ENCODE measurements at regions of chr7 and their contacts with region 1.

Region 1: DNA sequence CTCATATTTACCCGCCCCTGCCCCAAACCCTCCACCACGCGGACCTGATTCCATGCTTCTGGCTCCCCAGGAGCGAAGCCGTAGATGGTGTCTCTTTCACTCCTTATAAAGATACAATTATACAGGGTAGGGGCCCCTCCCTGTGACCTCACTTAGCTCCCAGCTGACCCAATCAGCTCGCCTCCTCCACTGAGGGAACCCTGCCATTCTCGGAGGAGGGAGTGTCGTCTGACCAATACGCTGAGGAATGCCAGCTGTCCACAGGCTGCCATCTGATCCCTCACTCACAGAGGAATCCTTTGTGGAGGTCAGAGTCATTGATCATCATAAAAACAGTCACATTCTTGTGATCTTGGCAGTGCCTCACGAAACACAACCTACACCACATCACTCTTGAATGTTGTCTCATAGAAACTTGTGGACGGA is 67.5 kb upstream of the INSIG1 start:
- DNase-seq: peak; percentile 100
- H3K4me3 ChIP-seq: no peak overlapping the region
- H3K27ac ChIP-seq: peak overlapping the region; percentile 85
- H3K4me1 ChIP-seq: peaks cover 7% of the 10 kb centered on the region
- H3K27me3 ChIP-seq: no peaks in the 10 kb centered on the region
- CTCF ChIP-seq: no peak

Region 2: DNA sequence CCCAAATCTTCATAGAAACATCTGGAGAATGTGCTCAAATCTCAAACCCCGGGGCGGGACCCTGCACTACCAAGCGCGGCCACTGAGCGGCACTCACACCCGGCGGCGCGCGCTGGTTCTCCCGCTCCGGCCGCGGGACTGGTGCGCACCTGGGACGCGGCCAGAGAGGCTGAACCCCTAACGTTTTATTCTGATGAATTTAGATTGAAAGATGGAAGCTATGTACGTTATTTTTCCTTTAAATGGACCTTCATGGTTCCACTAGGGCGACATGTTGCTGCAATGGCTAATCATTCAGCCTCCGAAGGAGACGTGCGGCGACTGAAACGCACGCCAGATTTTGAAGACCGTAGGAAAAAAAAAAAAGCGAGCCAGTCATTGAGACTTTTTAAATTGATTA is 39.5 kb before region 1 on chr7:
- CTCF ChIA-PET with region 1: no interaction called
- dilution Hi-C with region 1: loop called (anchors 5 kb)
- in situ Hi-C with region 1: no loop called
- intact Hi-C with region 1: no loop called
- DNase-seq: no peak
- H3K4me3 ChIP-seq: peak overlapping the region in 1 of 3 experiments; percentile 0
- H3K27ac ChIP-seq: no peak overlapping the region
- H3K4me1 ChIP-seq: no peaks in the 10 kb centered on the region
- H3K27me3 ChIP-seq: no peaks in the 10 kb centered on the region
- CTCF ChIP-seq: peak; percentile 81 to 94

Region 3: GRCh38 chr7:155205368-155206317 is 24.5 kb before region 1 on chr7:
- CTCF ChIA-PET with region 1: no interaction called
- dilution Hi-C with region 1: no loop called
- in situ Hi-C with region 1: no loop called
- intact Hi-C with region 1: loop called (anchors 2 kb)
- DNase-seq: peak; percentile 95
- H3K4me3 ChIP-seq: no peak overlapping the region
- H3K27ac ChIP-seq: peak overlapping the region; percentile 49
- H3K4me1 ChIP-seq: peaks cover 11% of the 10 kb centered on the region
- H3K27me3 ChIP-seq: no peaks in the 10 kb centered on the region
- CTCF ChIP-seq: no peak

Region 4: DNA sequence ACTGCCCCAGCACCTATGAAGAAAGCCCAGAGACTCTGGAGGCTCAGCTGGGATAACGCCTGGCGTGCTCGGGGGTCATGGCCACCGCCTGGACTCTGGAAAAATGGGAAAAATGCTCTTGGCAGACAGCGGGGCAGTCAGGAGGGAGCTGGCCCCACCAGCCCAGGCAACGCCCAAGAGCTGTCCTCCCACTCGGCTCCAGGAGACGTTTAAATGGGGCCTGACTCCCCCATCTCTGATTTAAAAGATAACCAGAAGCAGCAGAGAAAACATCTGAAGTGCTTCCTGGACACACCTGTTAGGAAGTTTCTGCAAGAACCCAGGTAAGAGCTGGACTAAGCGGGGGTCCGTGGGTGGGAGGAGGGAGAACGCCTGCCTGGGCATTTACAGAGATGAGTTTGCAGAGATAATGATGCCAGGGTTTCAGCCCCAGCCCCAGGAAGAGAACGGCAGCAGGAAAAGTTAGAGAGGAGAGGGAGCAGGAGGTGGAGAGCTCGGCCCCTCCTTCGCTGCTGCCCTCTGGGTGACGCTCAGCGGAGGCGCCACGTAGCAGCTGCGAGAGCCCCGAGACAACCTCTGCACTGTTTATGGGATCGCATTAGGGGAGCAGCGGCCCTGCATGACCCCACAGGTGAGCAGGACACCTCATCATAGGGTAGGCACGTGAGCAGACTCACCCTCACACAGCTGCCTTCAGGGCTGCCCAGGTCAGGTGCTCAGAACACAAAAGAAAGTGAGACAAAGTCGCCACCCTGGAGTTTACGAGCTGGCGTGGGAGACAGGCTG is 16.0 kb before region 1 on chr7:
- CTCF ChIA-PET with region 1: no interaction called
- dilution Hi-C with region 1: no loop called
- in situ Hi-C with region 1: no loop called
- intact Hi-C with region 1: loop called (anchors 2 kb)
- DNase-seq: peak; percentile 58
- H3K4me3 ChIP-seq: peak overlapping the region in 2 of 3 experiments; percentile 25 to 34
- H3K27ac ChIP-seq: no peak overlapping the region
- H3K4me1 ChIP-seq: peaks cover 17% of the 10 kb centered on the region
- H3K27me3 ChIP-seq: no peaks in the 10 kb centered on the region
- CTCF ChIP-seq: no peak

Region 5: DNA sequence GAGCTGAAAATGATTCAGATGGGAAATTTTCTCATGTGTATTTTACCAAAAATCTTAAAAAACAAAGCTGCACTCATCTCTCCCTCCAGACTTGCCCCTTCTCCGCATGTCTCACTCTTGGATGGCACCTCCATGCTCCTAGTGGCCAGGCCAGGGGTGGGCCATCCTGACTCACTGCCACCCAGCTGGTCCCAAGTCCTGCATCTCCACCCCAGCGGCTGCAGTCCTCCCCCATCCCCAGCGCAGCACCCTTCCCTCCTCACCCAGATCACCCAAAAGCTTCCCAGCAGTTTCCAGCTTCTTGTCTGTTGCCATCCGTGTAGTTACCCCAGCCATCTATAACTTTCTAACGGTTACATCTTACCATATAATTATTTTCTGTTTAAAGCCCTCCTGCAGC is 14.5 kb after region 1 on chr7:
- CTCF ChIA-PET with region 1: no interaction called
- dilution Hi-C with region 1: no loop called
- in situ Hi-C with region 1: no loop called
- intact Hi-C with region 1: no loop called
- DNase-seq: no peak
- H3K4me3 ChIP-seq: no peak overlapping the region
- H3K27ac ChIP-seq: no peak overlapping the region
- H3K4me1 ChIP-seq: peaks cover 3% of the 10 kb centered on the region
- H3K27me3 ChIP-seq: no peaks in the 10 kb centered on the region
- CTCF ChIP-seq: no peak

Region 6: GRCh38 chr7:155257482-155258225 is 27.5 kb after region 1 on chr7:
- CTCF ChIA-PET with region 1: no interaction called
- dilution Hi-C with region 1: no loop called
- in situ Hi-C with region 1: no loop called
- intact Hi-C with region 1: loop called (anchors 1 kb)
- DNase-seq: peak; percentile 69
- H3K4me3 ChIP-seq: no peak overlapping the region
- H3K27ac ChIP-seq: peak overlapping the region; percentile 43
- H3K4me1 ChIP-seq: peaks cover 14% of the 10 kb centered on the region
- H3K27me3 ChIP-seq: no peaks in the 10 kb centered on the region
- CTCF ChIP-seq: no peak

Region 7: DNA sequence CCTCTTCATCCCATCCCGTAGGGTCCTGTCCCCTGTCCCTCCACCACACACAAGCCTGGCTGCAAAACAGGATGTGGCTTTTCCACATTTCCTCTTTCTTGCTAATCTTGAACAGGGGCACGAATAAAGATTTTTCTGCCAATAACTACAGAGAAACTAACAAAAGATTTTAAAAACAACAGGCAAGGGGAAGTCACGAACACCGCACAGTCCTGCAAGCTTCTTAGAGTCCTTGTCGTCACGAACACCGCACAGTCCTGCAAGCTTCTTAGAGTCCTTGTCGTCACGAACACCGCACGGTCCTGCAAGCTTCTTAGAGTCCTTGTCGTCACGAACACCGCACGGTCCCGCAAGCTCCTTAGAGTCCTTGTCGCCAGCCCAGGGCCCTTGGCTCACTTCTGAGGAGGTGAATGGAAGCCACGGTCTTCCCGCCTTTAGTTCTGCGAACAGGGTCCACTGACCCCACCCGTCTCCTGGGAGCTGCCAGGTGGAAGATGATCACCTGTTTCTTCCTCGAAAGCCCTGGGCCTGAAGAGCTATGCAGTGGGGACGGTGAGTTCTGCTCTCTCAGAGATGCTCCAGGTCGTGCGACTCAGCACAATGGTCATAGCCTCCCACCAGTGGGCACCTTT is 57.2 kb after region 1 on chr7:
- CTCF ChIA-PET with region 1: no interaction called
- dilution Hi-C with region 1: loop called (anchors 5 kb)
- in situ Hi-C with region 1: no loop called
- intact Hi-C with region 1: no loop called
- DNase-seq: no peak
- H3K4me3 ChIP-seq: no peak overlapping the region
- H3K27ac ChIP-seq: no peak overlapping the region
- H3K4me1 ChIP-seq: peaks cover 10% of the 10 kb centered on the region
- H3K27me3 ChIP-seq: peaks cover 3% of the 10 kb centered on the region
- CTCF ChIP-seq: no peak